ENCODE measurements at regions of chr6 and their contacts with region 1.

Region 1: DNA sequence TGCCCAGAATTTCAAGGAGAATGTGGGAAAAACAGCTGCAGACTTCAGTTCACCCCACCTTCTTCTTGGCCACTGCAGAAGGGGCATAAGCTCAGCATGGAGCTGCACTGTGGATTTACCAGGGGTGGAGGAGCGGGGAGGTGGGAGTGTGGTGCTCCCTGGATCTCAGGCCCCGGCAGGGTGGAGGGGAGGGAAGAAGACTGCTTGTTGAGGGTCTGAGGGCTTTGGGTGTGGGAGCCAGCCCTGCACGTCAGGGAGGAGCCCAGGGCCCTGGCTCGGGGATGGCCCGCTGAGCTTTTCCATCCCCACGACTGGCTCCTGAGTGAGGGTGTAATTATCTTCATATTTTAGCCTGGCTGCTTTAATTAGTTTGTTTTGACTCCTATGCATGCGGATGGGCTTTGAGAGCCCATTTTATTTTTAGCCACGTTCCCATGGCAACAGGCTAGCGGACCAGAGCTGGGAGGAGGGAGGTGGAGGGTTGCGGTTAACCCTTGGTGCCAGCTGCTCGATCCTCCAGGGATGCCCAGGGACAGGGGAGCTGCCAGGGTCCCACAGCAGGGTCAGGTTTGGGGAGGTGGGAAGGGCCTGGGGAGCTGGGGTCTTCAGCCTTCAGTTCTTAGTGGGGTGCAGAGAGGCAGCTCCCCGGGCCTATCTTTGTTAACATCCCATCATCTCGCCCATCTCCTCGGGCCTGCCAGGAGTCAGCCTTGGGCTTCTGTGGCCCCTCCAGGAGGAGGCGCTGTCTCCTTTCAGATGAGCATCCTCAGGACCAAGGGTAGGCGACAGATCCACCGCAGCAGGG is 68.2 kb downstream of the RAB44 start:
- DNase-seq: peak; percentile 87
- H3K4me3 Mint-ChIP-seq: no peak overlapping the region
- H3K27ac Mint-ChIP-seq: no peak overlapping the region
- H3K4me1 Mint-ChIP-seq: peaks cover 39% of the 10 kb centered on the region
- H3K27me3 Mint-ChIP-seq: no peaks in the 10 kb centered on the region

Region 2: DNA sequence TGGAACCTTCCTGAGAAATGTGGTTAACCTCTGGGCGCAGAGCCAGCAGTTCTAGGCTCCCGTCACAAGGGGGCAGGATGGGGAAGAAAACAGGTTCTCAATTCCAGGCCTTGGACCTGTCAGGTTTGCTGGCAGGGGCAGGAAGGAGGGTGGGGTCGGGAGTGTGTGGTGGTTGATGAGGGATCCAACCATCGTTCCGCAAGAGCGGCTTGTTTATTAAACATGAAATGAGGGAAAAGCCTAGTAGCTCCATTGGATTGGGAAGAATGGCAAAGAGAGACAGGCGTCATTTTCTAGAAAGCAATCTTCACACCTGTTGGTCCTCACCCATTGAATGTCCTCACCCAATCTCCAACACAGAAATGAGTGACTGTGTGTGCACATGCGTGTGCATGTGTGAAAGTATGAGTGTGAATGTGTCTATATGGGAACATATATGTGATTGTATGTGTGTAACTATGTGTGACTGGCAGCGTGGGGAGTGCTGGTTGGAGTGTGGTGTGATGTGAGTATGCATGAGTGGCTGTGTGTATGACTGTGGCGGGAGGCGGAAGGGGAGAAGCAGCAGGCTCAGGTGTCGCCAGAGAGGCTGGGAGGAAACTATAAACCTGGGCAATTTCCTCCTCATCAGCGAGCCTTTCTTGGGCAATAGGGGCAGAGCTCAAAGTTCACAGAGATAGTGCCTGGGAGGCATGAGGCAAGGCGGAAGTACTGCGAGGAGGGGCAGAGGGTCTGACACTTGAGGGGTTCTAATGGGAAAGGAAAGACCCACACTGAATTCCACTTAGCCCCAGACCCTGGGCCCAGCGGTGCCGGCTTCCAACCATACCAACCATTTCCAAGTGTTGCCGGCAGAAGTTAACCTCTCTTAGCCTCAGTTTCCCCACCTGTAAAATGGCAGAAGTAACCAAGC is 142.0 kb before region 1 on chr6:
- CTCF ChIA-PET with region 1: interaction called, 174 read pairs
- POLR2A ChIA-PET with region 1: no interaction called
- DNase-seq: peak; percentile 82
- H3K4me3 Mint-ChIP-seq: no peak overlapping the region
- H3K27ac Mint-ChIP-seq: peak overlapping the region; percentile 0
- H3K4me1 Mint-ChIP-seq: peaks cover 33% of the 10 kb centered on the region
- H3K27me3 Mint-ChIP-seq: no peaks in the 10 kb centered on the region

Region 3: GRCh38 chr6:36851149-36851614 is 85.4 kb after region 1 on chr6:
- CTCF ChIA-PET with region 1: interaction called, 89 read pairs
- POLR2A ChIA-PET with region 1: interaction called, 6 read pairs
- DNase-seq: peak; percentile 46
- H3K4me3 Mint-ChIP-seq: no peak overlapping the region
- H3K27ac Mint-ChIP-seq: no peak overlapping the region
- H3K4me1 Mint-ChIP-seq: peaks cover 5% of the 10 kb centered on the region
- H3K27me3 Mint-ChIP-seq: no peaks in the 10 kb centered on the region

Region 4: DNA sequence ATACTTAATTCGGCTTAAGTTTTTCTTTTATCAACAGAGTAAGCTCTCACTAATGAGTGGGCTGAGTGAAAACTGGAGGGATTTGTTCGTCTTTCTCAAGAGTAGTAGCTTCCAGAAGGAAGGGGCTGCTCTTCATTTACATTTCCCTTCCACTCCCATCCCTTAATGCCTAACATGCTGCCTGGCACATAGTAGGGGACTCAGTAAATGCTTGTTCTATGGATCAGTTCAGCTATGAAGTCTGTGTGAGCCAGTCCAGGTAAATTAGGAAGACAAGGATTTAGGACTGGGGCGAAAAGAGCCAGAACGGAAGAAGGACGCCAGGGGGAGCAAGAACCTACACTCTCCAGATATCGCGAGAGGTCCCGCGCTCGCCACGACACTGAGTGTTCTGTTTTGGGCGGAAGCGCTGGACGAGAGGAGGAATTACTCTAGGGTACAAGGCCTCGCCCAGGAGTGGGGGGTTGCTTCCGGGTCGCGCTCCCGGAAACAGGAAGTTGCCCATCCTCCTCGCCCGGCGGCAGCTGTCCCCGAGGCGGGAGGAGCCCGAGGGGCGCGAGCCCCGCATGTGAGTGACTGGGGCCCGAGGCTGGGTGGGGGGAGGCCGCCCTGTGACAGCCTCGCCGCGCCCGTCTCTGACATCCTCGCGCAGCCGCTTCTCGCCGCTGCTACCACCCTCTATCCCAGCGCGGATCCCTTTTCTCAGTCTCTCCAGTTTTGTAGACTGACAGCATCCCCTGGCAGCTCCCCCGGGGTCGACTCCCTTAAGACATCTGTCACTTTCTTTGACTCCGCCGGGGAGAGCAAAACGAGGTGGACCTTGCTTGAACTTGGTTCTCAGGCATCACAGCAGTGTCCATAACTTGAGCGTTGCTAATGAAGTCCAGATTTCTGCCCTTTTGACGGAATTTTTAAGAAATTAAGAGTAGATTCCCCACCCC is 119.9 kb after region 1 on chr6 and contains the start of gene C6orf89:
- CTCF ChIA-PET with region 1: interaction called, 10 read pairs
- POLR2A ChIA-PET with region 1: interaction called, 3 read pairs
- DNase-seq: peak; percentile 98
- H3K4me3 Mint-ChIP-seq: peak within 1 kb of the TSS; percentile 89
- H3K27ac Mint-ChIP-seq: peak within 1 kb of the TSS; percentile 76
- H3K4me1 Mint-ChIP-seq: peaks cover 36% of the 10 kb centered on the region
- H3K27me3 Mint-ChIP-seq: no peaks in the 10 kb centered on the region
- total RNA-seq, gene C6orf89: 51.8 to 53.8 TPM